ENCODE measurements at regions of chr1 and their contacts with region 1.

Region 1: DNA sequence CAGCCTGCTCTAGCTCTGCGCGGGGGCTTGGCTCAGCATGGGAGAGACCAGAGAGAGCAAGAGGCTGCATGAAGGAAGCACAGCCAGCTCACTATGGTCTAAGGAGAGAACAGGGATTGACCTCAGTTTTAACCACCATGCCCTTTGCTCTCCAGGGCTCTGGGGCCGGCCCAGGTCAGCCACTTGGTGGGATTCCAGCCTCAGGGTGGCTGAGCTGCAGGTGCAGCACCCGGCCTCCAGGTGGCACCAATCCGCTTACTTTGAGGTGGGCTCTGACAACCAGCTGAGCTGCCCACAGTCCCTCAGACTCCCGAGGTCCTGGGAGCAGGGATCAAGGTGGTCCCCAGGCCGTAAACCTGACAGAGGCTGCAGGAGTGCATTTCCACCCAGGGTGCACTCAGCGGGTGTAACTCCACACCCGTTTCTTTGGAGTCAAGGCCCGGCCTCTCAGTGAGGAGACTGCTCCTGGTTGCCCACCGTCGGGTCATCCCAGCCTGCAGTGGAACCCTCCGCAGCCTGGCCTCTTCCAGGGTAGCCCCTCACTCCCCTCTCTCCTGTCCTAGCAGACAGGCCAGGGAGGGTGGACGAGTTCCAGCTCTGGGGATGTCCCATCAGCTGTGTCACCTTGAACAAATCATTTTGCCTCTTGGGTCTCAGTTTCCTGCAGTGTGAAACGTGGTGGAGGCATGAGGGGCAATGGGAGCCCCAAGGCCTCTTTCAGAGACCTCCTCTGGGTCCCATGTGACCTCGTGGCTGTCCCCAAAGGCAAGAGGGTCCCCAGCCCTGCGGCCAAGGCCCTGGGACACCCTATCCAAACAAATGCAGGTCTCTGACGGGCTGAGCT is 607 bp upstream of the LGR6 start:
- DNase-seq: peak; percentile 68
- H3K4me3 Mint-ChIP-seq: no peak overlapping the region
- H3K27ac Mint-ChIP-seq: no peak overlapping the region
- H3K4me1 Mint-ChIP-seq: peaks cover 3% of the 10 kb centered on the region
- H3K27me3 Mint-ChIP-seq: peaks cover 25% of the 10 kb centered on the region

Region 2: GRCh38 chr1:202160377-202160940 is 32.5 kb before region 1 on chr1 and contains the start of gene PTPN7:
- CTCF ChIA-PET with region 1: interaction called, 50 read pairs
- POLR2A ChIA-PET with region 1: no interaction called
- intact Hi-C with region 1: no loop called
- DNase-seq: peak; percentile 96
- H3K4me3 Mint-ChIP-seq: peak within 1 kb of the TSS; percentile 89
- H3K27ac Mint-ChIP-seq: peak within 1 kb of the TSS; percentile 97
- H3K4me1 Mint-ChIP-seq: peaks cover 73% of the 10 kb centered on the region
- H3K27me3 Mint-ChIP-seq: no peaks in the 10 kb centered on the region
- total RNA-seq, gene PTPN7: 197 to 199 TPM

Region 3: DNA sequence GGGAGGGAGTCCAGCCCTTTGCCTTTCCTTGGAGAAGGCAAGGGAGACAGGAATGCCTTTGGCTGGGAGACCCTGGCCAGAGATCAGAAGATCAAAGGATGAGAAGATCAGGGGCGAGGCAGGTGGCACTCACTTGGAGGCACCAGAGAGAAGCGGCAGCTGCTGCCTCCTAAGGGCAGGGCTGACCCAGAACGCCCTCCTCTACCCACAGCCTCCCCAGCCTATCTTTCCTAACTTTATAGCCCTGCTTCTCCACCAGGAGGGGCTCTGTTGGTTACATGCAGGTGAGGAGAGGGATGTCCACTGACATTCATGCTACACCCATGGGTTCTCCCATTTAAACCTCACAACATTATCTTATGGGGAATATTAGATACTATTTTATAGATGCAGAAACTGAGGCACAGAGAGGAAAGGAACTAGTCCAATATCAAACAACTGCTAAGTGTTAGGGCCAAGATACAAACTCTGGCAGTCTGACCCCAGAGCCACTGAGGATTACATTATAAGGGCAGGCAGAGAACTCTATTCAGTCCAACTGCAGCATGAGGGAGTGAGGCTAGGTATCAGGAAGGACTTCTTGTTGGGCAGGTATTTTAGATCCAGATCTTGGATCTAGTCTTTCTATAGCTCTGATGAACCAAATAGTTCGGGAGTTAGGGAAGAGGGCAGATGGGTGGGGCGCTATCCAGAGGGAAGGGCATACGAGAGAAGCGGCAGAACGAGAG is 20.5 kb after region 1 on chr1:
- CTCF ChIA-PET with region 1: interaction called, 10 read pairs
- POLR2A ChIA-PET with region 1: no interaction called
- intact Hi-C with region 1: no loop called
- DNase-seq: no peak
- H3K4me3 Mint-ChIP-seq: no peak overlapping the region
- H3K27ac Mint-ChIP-seq: no peak overlapping the region
- H3K4me1 Mint-ChIP-seq: peaks cover 7% of the 10 kb centered on the region
- H3K27me3 Mint-ChIP-seq: peaks cover 44% of the 10 kb centered on the region

Region 4: DNA sequence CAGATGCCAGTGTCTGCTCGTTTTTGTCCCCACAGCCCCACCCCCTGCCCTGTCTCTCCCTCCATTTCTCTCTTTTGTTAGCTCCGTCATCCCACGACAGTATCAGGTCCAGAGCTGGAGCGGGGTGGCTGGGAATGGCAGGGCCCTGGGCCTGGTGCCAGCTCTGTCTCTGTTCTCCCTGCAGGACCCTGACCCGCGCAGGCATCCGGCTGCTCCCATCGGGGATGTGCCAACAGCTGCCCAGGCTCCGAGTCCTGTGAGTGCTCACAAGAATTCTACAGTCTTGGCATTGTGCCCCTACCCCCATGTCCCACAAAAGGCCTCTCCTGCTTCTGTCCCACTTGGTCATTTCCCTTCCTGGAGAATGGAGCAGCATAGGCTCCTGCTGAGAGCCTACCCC is 111.4 kb after region 1 on chr1:
- CTCF ChIA-PET with region 1: interaction called, 11 read pairs
- POLR2A ChIA-PET with region 1: no interaction called
- intact Hi-C with region 1: no loop called
- DNase-seq: no peak
- H3K4me3 Mint-ChIP-seq: no peak overlapping the region
- H3K27ac Mint-ChIP-seq: no peak overlapping the region
- H3K4me1 Mint-ChIP-seq: no peaks in the 10 kb centered on the region
- H3K27me3 Mint-ChIP-seq: no peaks in the 10 kb centered on the region

Region 5: GRCh38 chr1:202716654-202717053 is 523.7 kb after region 1 on chr1:
- CTCF ChIA-PET with region 1: interaction called, 29 read pairs
- POLR2A ChIA-PET with region 1: no interaction called
- intact Hi-C with region 1: loop called (anchors 10 kb)
- DNase-seq: no peak
- H3K4me3 Mint-ChIP-seq: no peak overlapping the region
- H3K27ac Mint-ChIP-seq: no peak overlapping the region
- H3K4me1 Mint-ChIP-seq: peaks cover 2% of the 10 kb centered on the region
- H3K27me3 Mint-ChIP-seq: peaks cover 14% of the 10 kb centered on the region

Measured in activated CD4-positive, alpha-beta memory T cell treated with anti-CD3 and anti-CD28 coated beads for 36 hours (primary cell).